ENCODE measurements at regions of chr1 and their contacts with region 1.

Region 1: GRCh38 chr1:9145021-9145668 is 16.2 kb upstream of the GPR157 start:
- DNase-seq: peak; percentile 78
- H3K27ac ChIP-seq: no peak overlapping the region
- CTCF ChIP-seq: no peak

Region 2: GRCh38 chr1:9128520-9129265 is 16.5 kb before region 1 on chr1 and contains the start of gene GPR157:
- CTCF ChIA-PET with region 1: interaction called, 10 read pairs
- POLR2A ChIA-PET with region 1: no interaction called
- DNase-seq: peak; percentile 13
- H3K27ac ChIP-seq: peak within 1 kb of the TSS; percentile 83
- CTCF ChIP-seq: no peak

Region 3: GRCh38 chr1:9196129-9197040 is 51.2 kb after region 1 on chr1:
- CTCF ChIA-PET with region 1: interaction called, 12 read pairs
- POLR2A ChIA-PET with region 1: no interaction called
- DNase-seq: no peak
- H3K27ac ChIP-seq: peak overlapping the region; percentile 54
- CTCF ChIP-seq: peak; percentile 82

Region 4: DNA sequence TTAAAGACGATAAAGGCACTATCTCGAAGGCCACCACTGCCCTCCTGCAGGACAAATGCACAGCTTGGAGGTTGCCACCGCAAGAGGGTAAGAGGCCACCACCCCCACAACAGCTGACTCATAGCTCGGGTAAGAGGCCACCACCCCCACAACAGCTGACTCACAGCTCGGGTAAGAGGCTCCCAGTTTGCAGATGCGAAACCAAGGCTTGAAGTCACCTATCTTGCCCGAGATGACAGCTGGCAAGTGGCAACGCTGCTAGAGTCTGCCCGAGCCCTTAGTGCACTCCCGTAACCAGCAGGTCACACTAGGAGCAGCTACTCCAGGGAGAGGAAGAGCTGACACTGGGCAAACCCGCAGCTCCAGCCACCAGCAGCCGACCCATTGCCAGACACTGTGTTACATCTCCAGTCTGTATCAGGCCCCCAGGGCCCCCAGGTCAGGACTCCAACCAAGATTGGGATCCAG is 130.5 kb after region 1 on chr1:
- CTCF ChIA-PET with region 1: no interaction called
- POLR2A ChIA-PET with region 1: no interaction called
- DNase-seq: peak; percentile 89
- H3K27ac ChIP-seq: peak overlapping the region; percentile 61
- CTCF ChIP-seq: no peak